Endothelial cell of umbilical vein (primary cell): ENCODE measurements at regions of chr14 and their contacts with region 1.

Region 1: DNA sequence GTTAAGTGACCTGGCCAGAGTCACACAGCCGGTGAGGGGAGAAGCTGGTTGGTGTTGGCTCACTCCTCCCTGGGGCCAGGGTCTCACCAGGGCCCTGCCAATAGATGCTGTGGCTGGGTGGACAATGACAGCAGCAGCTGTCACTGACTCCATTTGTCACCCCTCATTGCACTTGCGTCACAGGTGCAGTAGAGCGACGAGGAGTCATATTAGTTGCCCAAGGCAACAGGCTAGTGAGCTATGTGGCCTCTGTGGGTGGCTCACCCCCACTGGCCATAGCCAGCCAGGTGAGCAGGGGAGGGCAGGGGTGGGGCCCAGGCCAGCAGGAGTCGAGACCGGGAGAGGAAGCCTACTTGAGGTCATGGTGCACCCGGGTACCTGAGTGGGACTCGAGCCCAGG is 9.7 kb downstream of the SLC25A47 start:
- DNase-seq: no peak
- H3K4me3 ChIP-seq: no peak overlapping the region
- H3K27ac ChIP-seq: no peak overlapping the region
- H3K4me1 ChIP-seq: no peaks in the 10 kb centered on the region
- H3K27me3 ChIP-seq: no peaks in the 10 kb centered on the region
- CTCF ChIP-seq: no peak
- POLR2A ChIP-seq: no peak

Region 2: GRCh38 chr14:100317912-100318808 is 14.6 kb before region 1 on chr14:
- CTCF ChIA-PET with region 1: interaction called, 7 read pairs
- POLR2A ChIA-PET with region 1: interaction called, 4 read pairs
- dilution Hi-C with region 1: no loop called
- intact Hi-C with region 1: loop called (anchors 1 kb)
- DNase-seq: peak; percentile 70
- H3K4me3 ChIP-seq: no peak overlapping the region
- H3K27ac ChIP-seq: no peak overlapping the region
- H3K4me1 ChIP-seq: no peaks in the 10 kb centered on the region
- H3K27me3 ChIP-seq: no peaks in the 10 kb centered on the region
- CTCF ChIP-seq: peak; percentile 95 to 96
- POLR2A ChIP-seq: no peak

Region 3: DNA sequence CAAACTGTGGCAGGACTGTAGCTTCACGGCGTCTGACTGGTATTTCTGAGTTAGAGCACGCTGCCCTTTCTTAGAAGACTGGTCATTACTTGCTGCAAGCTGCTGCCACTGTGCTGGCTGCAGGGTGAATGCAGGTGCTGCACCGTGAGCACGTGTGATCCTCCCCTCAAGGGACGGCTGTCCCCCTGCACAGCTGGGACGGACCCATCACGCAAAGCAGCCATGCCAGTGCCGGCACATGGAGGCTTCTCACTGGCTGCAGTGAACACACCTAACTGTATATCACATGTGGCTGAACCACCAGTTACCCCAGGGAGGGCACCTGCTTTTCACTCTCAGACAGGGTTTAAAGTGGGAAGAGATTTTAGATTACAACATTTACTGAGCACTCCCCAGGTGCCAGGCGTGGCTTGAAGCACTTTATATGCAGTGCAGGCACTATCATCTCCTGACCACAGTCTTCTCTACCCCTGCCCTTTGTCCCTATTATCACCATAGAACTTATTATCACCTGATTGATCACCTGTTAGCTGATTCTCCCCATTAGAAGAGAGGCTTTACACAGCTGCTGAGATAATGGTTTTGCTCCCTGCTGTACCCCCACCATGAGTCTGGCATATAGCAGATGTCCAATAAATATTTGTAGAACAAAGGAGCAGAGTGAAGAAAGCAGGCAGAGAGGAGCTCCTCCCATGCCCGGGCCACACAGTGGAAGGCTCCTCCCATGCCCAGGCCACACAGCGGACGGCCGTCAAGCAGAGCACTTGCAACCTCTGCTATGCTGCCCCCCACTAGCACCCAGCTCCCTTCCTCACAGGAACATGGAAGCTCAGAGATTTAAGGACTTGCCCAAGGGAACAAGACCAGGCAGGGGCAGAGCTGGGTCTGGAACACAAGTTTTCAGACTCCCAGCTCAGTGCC is 16.2 kb after region 1 on chr14:
- CTCF ChIA-PET with region 1: no interaction called
- POLR2A ChIA-PET with region 1: no interaction called
- dilution Hi-C with region 1: no loop called
- intact Hi-C with region 1: no loop called
- DNase-seq: no peak
- H3K4me3 ChIP-seq: no peak overlapping the region
- H3K27ac ChIP-seq: no peak overlapping the region
- H3K4me1 ChIP-seq: no peaks in the 10 kb centered on the region
- H3K27me3 ChIP-seq: no peaks in the 10 kb centered on the region
- CTCF ChIP-seq: no peak
- POLR2A ChIP-seq: no peak